H1 (cell line): ENCODE measurements at regions of chr4 and their contacts with region 1.

Region 1: DNA sequence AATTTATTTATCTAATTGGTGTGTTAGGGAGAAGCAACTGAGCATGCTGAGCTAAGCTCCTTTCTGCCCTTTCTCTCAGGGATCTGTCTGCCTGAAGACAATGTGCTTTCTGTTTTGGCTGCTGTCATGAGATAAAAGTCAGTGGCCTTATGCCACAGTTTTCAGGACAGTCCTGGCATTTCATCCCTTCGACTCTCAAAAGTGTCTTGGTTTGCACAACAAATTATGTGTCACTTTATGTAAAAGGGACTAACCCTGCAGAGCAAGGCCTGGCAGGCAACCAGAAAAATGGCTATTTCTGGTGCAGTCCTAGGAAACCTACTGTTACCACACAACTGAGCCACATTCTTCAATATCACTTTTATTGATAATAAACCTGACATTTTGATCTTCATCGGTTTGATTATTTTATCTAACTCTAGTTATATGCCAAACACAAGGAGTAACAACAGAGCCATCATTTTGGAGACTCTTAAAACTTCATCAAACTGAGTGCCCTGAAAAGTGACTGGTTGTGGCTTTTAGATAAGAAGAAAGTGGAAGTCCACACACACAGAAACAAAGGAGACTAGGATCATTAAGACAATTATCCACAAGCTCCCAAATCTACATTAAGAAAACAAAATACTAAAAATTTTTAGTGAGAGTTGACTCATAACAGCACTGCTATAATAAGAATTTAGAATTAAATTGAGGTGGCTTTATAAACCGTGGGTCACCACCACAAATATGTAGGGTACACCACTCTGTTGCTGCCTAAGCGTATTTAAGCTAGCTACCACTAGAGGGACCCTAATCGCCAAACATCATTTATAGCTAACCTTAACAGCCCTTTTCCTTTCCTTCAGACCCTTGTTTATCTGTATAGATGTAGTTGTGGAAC is 95.9 kb upstream of the PTPN13 start:
- DNase-seq: no peak
- H3K4me3 ChIP-seq: no peak overlapping the region
- H3K27ac ChIP-seq: no peak overlapping the region
- H3K4me1 ChIP-seq: peaks cover 0 to 11% (median 1%) of the 10 kb centered on the region in 4 experiments; a peak in 2 of 7 replicates
- H3K27me3 ChIP-seq: no peaks in the 10 kb centered on the region
- CTCF ChIP-seq: peak in 2 of 3 experiments; percentile 70 to 89; a peak in 3 of 4 replicates
- EP300 ChIP-seq: no peak
- POLR2A ChIP-seq: no peak
- RAD21 ChIP-seq: peak; percentile 88 to 90

Region 2: DNA sequence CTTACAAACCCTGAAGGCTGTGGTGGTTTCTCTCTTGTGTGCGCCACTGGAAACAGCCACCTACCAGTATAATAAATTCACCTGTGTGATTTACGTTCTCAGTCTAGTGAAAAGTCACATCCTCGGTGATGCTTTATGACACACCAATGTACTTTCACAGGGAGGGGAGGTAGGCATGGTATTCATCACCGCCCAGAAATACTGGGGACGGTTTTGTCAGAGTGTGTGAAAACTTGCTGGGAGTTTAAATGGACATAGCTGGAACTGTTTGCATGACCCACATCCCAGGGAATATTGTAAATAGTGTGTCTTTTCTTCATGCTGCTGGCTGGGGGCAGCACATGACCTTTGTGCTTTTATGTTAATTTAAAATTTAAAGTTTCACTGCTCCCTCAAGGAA is 560.2 kb before region 1 on chr4:
- CTCF ChIA-PET with region 1: no interaction called
- POLR2A ChIA-PET with region 1: no interaction called
- DNase-seq: no peak
- H3K4me3 ChIP-seq: no peak overlapping the region
- H3K27ac ChIP-seq: no peak overlapping the region
- H3K4me1 ChIP-seq: no peaks in the 10 kb centered on the region
- H3K27me3 ChIP-seq: no peaks in the 10 kb centered on the region
- CTCF ChIP-seq: no peak
- EP300 ChIP-seq: no peak
- POLR2A ChIP-seq: no peak
- RAD21 ChIP-seq: no peak

Region 3: DNA sequence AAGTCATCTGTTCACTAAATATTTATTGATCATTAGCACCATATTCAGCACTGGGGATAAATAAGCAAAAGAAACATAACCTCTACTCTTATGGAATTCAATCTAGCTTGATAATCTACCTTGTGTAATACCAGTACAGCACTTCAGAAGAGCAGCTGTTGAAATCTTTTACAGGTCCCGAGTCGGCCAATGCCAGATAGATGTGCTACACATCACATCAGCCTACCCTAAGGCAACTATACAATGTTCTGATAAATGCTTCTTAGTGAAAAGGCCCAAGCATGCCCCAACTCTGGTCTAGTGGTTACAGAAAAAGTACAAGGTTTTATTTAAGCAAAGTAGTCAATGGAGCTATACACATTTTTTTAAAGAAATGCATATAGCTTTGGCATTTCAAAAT is 207.0 kb before region 1 on chr4:
- CTCF ChIA-PET with region 1: no interaction called
- POLR2A ChIA-PET with region 1: no interaction called
- DNase-seq: no peak
- H3K4me3 ChIP-seq: no peak overlapping the region
- H3K27ac ChIP-seq: no peak overlapping the region
- H3K4me1 ChIP-seq: no peaks in the 10 kb centered on the region
- H3K27me3 ChIP-seq: no peaks in the 10 kb centered on the region; a peak in 1 of 7 replicates
- CTCF ChIP-seq: no peak
- EP300 ChIP-seq: no peak
- POLR2A ChIP-seq: no peak
- RAD21 ChIP-seq: no peak

Region 4: DNA sequence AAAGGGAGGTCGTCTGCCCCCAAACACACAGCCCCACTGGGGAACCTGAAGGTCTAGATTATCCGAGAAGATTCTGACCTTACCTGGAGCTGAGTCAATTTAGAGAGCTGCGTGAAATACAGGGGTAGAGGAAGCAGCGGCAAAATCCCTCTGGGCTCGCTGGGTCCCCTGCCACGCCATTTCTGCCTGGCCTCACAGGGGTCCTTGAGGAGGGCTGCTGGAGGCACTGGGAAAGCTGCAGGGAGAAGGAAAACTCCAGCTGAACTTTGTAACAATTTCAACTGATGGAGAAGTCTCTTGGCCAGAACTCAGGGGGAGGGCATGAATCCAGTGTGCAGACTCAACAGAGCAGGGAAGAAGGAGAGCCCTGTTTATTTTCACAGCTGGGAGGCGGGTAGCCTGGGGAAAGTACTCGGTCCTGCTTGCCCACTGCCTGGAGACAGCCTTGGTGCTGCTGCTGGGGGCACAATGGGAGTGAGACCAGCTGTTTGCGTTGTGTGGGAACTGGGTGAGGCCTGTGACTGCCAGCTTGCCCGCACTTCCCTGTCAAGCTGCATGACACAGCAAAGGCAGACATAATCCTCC is 45.2 kb before region 1 on chr4:
- CTCF ChIA-PET with region 1: interaction called, 11 read pairs
- POLR2A ChIA-PET with region 1: no interaction called
- DNase-seq: no peak
- H3K4me3 ChIP-seq: no peak overlapping the region
- H3K27ac ChIP-seq: no peak overlapping the region
- H3K4me1 ChIP-seq: peaks cover 4 to 20% (median 19%) of the 10 kb centered on the region in 4 experiments; a peak in 6 of 7 replicates
- H3K27me3 ChIP-seq: no peaks in the 10 kb centered on the region
- CTCF ChIP-seq: no peak
- EP300 ChIP-seq: no peak
- POLR2A ChIP-seq: no peak
- RAD21 ChIP-seq: no peak

Region 5: GRCh38 chr4:86487738-86488348 is 10.4 kb before region 1 on chr4:
- CTCF ChIA-PET with region 1: interaction called, 31 read pairs
- POLR2A ChIA-PET with region 1: interaction called, 5 read pairs
- DNase-seq: no peak
- H3K4me3 ChIP-seq: no peak overlapping the region
- H3K27ac ChIP-seq: no peak overlapping the region
- H3K4me1 ChIP-seq: peaks cover 0 to 8% (median 5%) of the 10 kb centered on the region in 4 experiments; a peak in 3 of 7 replicates
- H3K27me3 ChIP-seq: no peaks in the 10 kb centered on the region
- CTCF ChIP-seq: no peak
- EP300 ChIP-seq: no peak
- POLR2A ChIP-seq: no peak
- RAD21 ChIP-seq: no peak

Region 6: DNA sequence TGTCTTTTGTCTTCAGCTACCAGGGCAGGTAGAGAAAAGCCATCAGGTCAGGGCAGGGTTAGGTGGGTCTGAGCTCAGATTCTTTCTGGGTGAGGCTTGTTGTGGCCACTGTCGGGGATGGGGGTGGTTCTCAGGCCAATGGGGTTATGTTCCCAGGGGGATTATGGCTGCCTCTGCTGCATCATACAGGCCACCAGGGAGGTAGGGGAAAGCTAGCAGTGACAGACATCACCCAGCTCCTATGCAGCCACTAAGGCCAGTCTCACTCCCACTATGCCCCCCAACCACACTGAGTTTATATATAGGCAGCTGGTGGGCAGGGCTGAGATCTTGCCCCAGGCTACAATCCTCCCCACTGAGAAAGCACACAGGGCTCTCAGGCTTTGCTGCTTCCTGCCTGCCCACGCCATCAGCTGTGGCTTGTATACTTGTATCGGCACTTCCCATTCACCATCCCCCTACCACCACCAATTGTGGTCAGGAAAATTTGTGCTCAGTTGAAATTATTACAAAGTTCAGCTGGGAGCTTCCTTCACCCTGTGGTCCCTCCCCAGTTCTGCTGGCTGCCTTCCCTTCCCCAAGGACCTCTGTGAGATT is 23.2 kb after region 1 on chr4:
- CTCF ChIA-PET with region 1: interaction called, 16 read pairs
- POLR2A ChIA-PET with region 1: no interaction called
- DNase-seq: no peak
- H3K4me3 ChIP-seq: no peak overlapping the region
- H3K27ac ChIP-seq: no peak overlapping the region
- H3K4me1 ChIP-seq: no peaks in the 10 kb centered on the region
- H3K27me3 ChIP-seq: no peaks in the 10 kb centered on the region
- CTCF ChIP-seq: no peak
- EP300 ChIP-seq: no peak
- POLR2A ChIP-seq: no peak
- RAD21 ChIP-seq: no peak

Region 7: DNA sequence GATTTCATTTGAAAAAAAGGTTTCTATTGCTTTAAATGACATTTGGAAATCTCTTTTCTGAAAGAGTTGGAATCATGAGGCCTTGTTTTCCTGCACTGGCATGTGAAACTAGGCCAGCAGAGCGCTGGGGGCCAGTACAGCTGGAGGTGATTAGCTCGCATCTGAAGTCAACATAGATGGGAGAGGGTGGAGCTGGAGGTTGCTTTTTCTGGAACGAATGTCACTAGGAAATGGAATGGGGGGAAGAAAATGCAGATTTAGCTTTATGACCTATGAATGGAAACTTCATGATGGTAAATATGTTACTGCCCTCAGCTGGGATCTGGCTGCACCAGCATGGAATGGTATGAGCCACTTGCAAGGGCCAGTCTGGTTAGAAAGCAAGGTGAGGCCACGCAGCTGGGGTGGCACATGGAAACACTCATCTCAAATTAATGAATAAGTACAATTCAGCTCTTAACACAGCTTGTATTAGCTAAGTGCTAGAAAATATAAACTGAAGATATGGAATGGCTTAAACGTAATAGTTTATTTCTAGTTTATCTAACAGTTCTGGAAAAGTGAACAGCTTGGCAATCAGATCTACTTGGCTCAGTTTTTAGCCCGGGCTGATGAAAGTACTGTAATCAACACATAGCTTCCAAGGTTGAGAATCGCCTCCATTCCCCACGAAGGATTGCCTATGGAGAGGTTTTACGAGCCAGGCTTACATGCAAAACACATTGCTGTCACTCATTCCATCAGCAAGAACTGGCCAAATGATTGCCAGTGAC is 318.5 kb after region 1 on chr4:
- CTCF ChIA-PET with region 1: interaction called, 20 read pairs
- POLR2A ChIA-PET with region 1: no interaction called
- DNase-seq: no peak
- H3K4me3 ChIP-seq: no peak overlapping the region
- H3K27ac ChIP-seq: no peak overlapping the region
- H3K4me1 ChIP-seq: peaks cover 0 to 3% (median 0%) of the 10 kb centered on the region in 4 experiments; a peak in 1 of 7 replicates
- H3K27me3 ChIP-seq: no peaks in the 10 kb centered on the region
- CTCF ChIP-seq: no peak
- EP300 ChIP-seq: no peak
- POLR2A ChIP-seq: no peak
- RAD21 ChIP-seq: no peak